ENCODE measurements at regions of chr15 and their contacts with region 1.

Region 1: DNA sequence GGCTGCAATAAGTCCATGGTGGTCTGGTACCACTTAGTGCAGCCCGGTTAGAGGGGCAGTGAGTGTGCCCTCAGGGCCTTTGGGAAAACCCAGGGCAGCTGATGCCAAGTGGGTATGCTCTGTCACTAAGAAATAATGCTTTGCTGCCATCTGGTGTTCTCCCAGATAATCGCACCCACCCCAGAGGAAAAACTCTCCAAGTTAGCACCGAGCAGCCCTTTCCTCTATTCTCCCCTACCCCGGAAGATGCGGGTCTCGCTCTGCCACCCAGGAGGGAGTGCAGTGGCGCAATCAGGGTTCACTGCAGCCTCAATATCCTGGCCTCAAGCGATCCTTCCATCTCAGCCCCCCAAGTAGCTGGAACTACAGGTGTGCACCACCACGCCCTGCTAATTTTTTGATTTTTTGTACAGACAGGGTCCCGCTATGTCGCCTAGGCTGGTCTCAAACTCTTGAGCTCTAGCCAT is 21.3 kb upstream of the DAPK2 start:
- DNase-seq: peak; percentile 44 to 83 (median 62)
- ATAC-seq: peak; percentile 89
- H3K4me3 ChIP-seq: no peak overlapping the region
- H3K4me3 Mint-ChIP-seq: no peak overlapping the region
- H3K27ac ChIP-seq: no peak overlapping the region
- H3K27ac Mint-ChIP-seq: no peak overlapping the region
- H3K4me1 ChIP-seq: peaks cover 7% of the 10 kb centered on the region
- H3K4me1 Mint-ChIP-seq: no peaks in the 10 kb centered on the region
- H3K27me3 ChIP-seq: no peaks in the 10 kb centered on the region
- H3K27me3 Mint-ChIP-seq: no peaks in the 10 kb centered on the region
- CTCF ChIP-seq: peak; percentile 75

Region 2: DNA sequence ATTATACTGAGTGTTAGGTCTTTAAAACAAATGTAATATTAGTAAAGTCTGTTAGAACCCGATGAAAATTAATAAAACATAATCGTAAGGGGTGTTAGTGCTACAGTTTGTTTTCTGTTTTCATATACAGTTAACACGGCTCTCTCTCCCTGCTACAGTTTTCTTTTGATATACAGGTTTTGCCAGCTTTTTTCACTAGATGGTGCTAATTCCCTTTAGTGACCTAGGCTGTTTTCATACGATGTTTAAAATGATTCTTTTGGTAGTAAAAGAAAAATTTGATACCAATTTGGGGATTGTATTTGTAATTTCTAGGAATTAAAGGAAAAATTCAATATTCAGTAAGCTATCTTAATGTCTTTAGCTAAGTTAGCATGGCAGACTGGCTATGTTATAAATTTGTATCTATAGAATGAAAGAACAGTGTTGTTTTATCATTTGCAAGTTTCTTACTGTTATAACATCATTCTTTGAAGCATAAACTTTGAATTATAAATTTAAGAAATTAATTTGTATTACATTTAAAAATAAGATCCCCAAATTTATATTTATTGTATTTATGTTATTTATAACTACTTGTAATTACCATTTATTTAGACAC is 778.7 kb before region 1 on chr15:
- CTCF ChIA-PET with region 1: no interaction called
- POLR2A ChIA-PET with region 1: no interaction called
- intact Hi-C with region 1: loop called (anchors 2 to 10 kb)
- DNase-seq: peak in 3 of 14 experiments; percentile 67 to 70 (median 69)
- ATAC-seq: peak; percentile 88
- H3K4me3 ChIP-seq: no peak overlapping the region
- H3K4me3 Mint-ChIP-seq: no peak overlapping the region
- H3K27ac ChIP-seq: no peak overlapping the region
- H3K27ac Mint-ChIP-seq: no peak overlapping the region
- H3K4me1 ChIP-seq: no peaks in the 10 kb centered on the region
- H3K4me1 Mint-ChIP-seq: peaks cover 9% of the 10 kb centered on the region
- H3K27me3 ChIP-seq: no peaks in the 10 kb centered on the region
- H3K27me3 Mint-ChIP-seq: no peaks in the 10 kb centered on the region
- CTCF ChIP-seq: peak; percentile 73

Region 3: DNA sequence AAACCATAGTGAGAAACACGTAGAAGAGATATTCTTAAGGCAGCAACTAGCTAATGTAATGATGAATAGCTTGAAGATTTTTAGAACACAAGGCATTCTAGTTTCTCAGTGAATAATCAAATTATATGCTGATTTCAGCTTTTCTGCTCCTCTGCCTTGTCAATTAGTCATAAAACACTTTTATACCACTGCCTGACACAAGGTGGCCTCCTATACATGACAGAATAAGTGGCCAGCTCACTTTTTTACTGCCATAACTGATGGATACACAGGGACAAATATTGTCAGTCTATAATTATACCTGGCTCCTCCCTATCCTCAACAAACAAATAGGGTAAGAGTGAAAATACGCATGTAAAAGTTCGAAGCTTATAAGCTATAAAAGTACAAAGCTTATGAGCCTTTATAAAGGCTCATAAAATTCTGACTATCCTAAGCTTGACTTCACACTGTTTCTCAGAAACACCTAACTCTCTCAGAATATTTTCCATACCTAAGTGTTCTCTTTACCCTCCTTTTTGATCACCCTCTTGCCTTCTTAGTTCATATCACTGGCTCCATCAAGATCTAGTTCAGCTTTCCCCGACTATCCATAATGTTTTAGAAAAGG is 315.4 kb before region 1 on chr15:
- CTCF ChIA-PET with region 1: interaction called, 24 read pairs
- POLR2A ChIA-PET with region 1: interaction called, 7 read pairs
- intact Hi-C with region 1: loop called (anchors 1 kb)
- DNase-seq: peak in 9 of 14 experiments; percentile 15 to 74 (median 24)
- ATAC-seq: peak; percentile 73
- H3K4me3 ChIP-seq: no peak overlapping the region
- H3K4me3 Mint-ChIP-seq: no peak overlapping the region
- H3K27ac ChIP-seq: no peak overlapping the region
- H3K27ac Mint-ChIP-seq: peak overlapping the region; percentile 3
- H3K4me1 ChIP-seq: no peaks in the 10 kb centered on the region
- H3K4me1 Mint-ChIP-seq: peaks cover 6% of the 10 kb centered on the region
- H3K27me3 ChIP-seq: no peaks in the 10 kb centered on the region
- H3K27me3 Mint-ChIP-seq: no peaks in the 10 kb centered on the region
- CTCF ChIP-seq: peak; percentile 80

Region 4: DNA sequence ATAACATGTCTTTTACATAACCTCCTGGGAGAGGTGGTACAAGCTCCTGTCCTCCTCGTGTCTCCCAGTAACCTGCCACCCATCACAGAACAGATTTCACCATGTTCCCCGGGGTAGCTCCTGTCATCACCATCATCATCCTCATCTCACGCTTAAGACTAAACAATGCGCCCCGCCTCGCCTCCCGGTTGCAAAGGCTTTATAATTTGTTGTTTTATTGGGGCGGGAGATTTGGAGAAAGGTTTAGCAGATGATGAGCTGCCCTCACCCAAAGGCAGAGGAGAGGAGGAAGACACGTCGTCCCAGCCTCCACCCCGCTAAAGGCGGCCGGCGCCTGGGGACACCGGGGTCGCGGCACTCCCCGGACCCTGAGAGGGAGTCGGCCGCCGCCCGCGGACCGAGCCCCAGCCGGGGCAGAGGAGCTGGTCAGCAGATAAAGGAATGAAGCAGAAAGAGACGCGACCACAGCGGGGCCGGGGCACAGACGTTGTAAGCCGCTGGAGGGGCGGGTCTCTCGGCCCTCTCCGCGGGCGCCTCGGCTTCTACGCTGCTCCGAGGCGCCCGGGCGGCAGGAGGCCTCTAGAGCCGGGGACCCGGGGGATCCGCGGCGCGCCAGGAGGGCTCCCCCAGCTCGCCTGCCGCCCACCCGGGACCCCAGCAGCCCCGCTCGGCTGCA is 234.4 kb before region 1 on chr15:
- CTCF ChIA-PET with region 1: interaction called, 9 read pairs
- POLR2A ChIA-PET with region 1: interaction called, 3 read pairs
- intact Hi-C with region 1: loop called in 1 of 2 experiments (anchors 5 kb)
- DNase-seq: peak; percentile 7 to 46 (median 19)
- ATAC-seq: peak; percentile 21
- H3K4me3 ChIP-seq: peak overlapping the region; percentile 92
- H3K4me3 Mint-ChIP-seq: peak overlapping the region; percentile 98
- H3K27ac ChIP-seq: peak overlapping the region; percentile 63 to 93
- H3K27ac Mint-ChIP-seq: peak overlapping the region; percentile 99
- H3K4me1 ChIP-seq: peaks cover 23% of the 10 kb centered on the region
- H3K4me1 Mint-ChIP-seq: peaks cover 67% of the 10 kb centered on the region
- H3K27me3 ChIP-seq: no peaks in the 10 kb centered on the region
- H3K27me3 Mint-ChIP-seq: no peaks in the 10 kb centered on the region
- CTCF ChIP-seq: no peak

Region 5: GRCh38 chr15:64010719-64011118 is 56.9 kb before region 1 on chr15:
- CTCF ChIA-PET with region 1: interaction called, 17 read pairs
- POLR2A ChIA-PET with region 1: no interaction called
- intact Hi-C with region 1: no loop called
- DNase-seq: peak; percentile 75 to 95 (median 83)
- ATAC-seq: peak; percentile 93
- H3K4me3 ChIP-seq: no peak overlapping the region
- H3K4me3 Mint-ChIP-seq: peak overlapping the region; percentile 66
- H3K27ac ChIP-seq: peak overlapping the region; percentile 64 to 72
- H3K27ac Mint-ChIP-seq: peak overlapping the region; percentile 93
- H3K4me1 ChIP-seq: peaks cover 38% of the 10 kb centered on the region
- H3K4me1 Mint-ChIP-seq: peaks cover 41% of the 10 kb centered on the region
- H3K27me3 ChIP-seq: no peaks in the 10 kb centered on the region
- H3K27me3 Mint-ChIP-seq: no peaks in the 10 kb centered on the region
- CTCF ChIP-seq: peak; percentile 52

Measured in CD4-positive, alpha-beta T cell (primary cell).